Vagina (tissue), 2 donors: ENCODE measurements at regions of chr2 and their contacts with region 1.

Region 1: GRCh38 chr2:27133905-27134780 is at the start of gene PREB:
- DNase-seq: peak in 1 of 2 donors; percentile 95
- H3K4me3 ChIP-seq: peak within 1 kb of the TSS; percentile 96 to 99
- H3K27ac ChIP-seq: peak within 1 kb of the TSS; percentile 89
- H3K4me1 ChIP-seq: peaks cover 20% of the 10 kb centered on the region
- H3K27me3 ChIP-seq: no peaks in the 10 kb centered on the region
- CTCF ChIP-seq: peak in 1 of 3 experiments; percentile 3
- POLR2A ChIP-seq: peak; percentile 28 to 96
- total RNA-seq, gene PREB: 57.5 TPM

Region 2: GRCh38 chr2:27185331-27186026 is 51.3 kb after region 1 on chr2:
- intact Hi-C with region 1: loop called (anchors 5 kb)
- DNase-seq: peak in 1 of 2 donors; percentile 94
- H3K4me3 ChIP-seq: no peak overlapping the region
- H3K27ac ChIP-seq: peak overlapping the region; percentile 68
- H3K4me1 ChIP-seq: peaks cover 6% of the 10 kb centered on the region
- H3K27me3 ChIP-seq: no peaks in the 10 kb centered on the region
- CTCF ChIP-seq: no peak
- POLR2A ChIP-seq: no peak

Region 3: GRCh38 chr2:27241761-27242613 is 107.8 kb after region 1 on chr2:
- intact Hi-C with region 1: no loop called
- DNase-seq: no peak
- H3K4me3 ChIP-seq: no peak overlapping the region
- H3K27ac ChIP-seq: no peak overlapping the region
- H3K4me1 ChIP-seq: no peaks in the 10 kb centered on the region
- H3K27me3 ChIP-seq: no peaks in the 10 kb centered on the region
- CTCF ChIP-seq: no peak
- POLR2A ChIP-seq: no peak